ENCODE measurements at regions of chrX and their contacts with region 1.

Region 1: GRCh38 chrX:154534862-154535670 is 11.6 kb downstream of the G6PD start:
- DNase-seq: peak; percentile 84 to 85
- H3K4me3 ChIP-seq: no peak overlapping the region
- H3K27ac ChIP-seq: peak overlapping the region in 1 of 3 donors; percentile 39
- H3K4me1 ChIP-seq: peaks cover 2 to 17% of the 10 kb centered on the region in 2 donors
- H3K27me3 ChIP-seq: no peaks in the 10 kb centered on the region
- CTCF ChIP-seq: peak; percentile 71 to 100 (median 96)
- POLR2A ChIP-seq: no peak

Region 2: DNA sequence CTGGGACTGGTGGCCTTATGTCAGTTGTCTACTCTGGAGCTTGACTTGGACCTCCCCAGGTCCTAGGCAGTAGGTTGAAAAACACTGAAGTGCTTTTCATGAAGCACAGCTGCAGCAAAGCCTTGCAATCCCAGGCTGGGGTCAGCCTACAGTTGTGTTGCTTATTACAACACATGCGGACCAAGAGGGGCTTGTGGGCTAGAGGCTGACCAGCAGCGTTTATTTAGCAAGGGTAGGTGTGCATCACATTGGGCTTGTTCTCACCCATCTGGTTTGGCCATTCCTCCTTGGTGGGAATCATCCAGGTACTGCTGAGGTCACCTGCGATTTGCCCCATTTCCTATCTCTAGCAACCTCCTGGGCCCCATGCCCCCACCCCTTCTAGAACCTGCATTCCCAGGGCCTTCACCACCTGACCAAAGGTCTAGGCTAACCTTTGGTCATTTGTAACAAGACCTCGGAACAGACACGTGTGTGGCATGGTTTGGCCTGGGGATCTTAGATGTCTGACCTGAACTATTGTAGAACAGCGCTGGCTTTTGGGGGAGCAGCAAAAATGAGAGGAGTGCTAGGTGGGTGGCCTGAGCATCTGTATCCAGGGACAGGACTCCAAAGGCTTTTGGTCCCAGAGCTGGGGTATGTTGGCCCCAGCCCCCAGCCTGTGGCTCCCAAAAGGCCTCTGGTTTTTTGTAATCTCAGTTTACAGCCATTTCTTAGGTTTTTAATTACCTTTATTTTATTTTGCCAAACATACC is 133.8 kb before region 1 on chrX:
- intact Hi-C with region 1: loop called (anchors 5 kb)
- DNase-seq: no peak
- H3K4me3 ChIP-seq: no peak overlapping the region
- H3K27ac ChIP-seq: no peak overlapping the region
- H3K4me1 ChIP-seq: peaks cover 9% of the 10 kb centered on the region in 2 donors
- H3K27me3 ChIP-seq: no peaks in the 10 kb centered on the region
- CTCF ChIP-seq: no peak
- POLR2A ChIP-seq: no peak

Measured in thyroid gland (tissue), 4 donors.